ENCODE measurements at regions of chr12 and their contacts with region 1.

Region 1: GRCh38 chr12:95217377-95218149 is at the starts of genes FGD6 and VEZT:
- DNase-seq: peak; percentile 100
- H3K4me3 ChIP-seq: peak within 1 kb of the TSS; percentile 81 to 99 (median 94)
- H3K27ac ChIP-seq: peak within 1 kb of the TSS; percentile 88
- H3K4me1 ChIP-seq: peaks cover 37% of the 10 kb centered on the region
- H3K27me3 ChIP-seq: no peaks in the 10 kb centered on the region
- CTCF ChIP-seq: peak; percentile 61 to 70
- POLR2A ChIP-seq: peak; percentile 86
- total RNA-seq, gene FGD6: 14.0 and 17.8 TPM in 2 replicates
- total RNA-seq, gene VEZT: 85.2 and 91.3 TPM in 2 replicates

Region 2: GRCh38 chr12:94545935-94546771 is 671.4 kb before region 1 on chr12:
- CTCF ChIA-PET with region 1: no interaction called
- POLR2A ChIA-PET with region 1: no interaction called
- dilution Hi-C with region 1: no loop called
- intact Hi-C with region 1: loop called (anchors 1 kb)
- DNase-seq: peak; percentile 76
- H3K4me3 ChIP-seq: no peak overlapping the region
- H3K27ac ChIP-seq: no peak overlapping the region
- H3K4me1 ChIP-seq: no peaks in the 10 kb centered on the region
- H3K27me3 ChIP-seq: no peaks in the 10 kb centered on the region
- CTCF ChIP-seq: peak; percentile 83 to 91
- POLR2A ChIP-seq: no peak

Region 3: GRCh38 chr12:94615284-94616181 is 602.0 kb before region 1 on chr12:
- CTCF ChIA-PET with region 1: no interaction called
- POLR2A ChIA-PET with region 1: no interaction called
- dilution Hi-C with region 1: no loop called
- intact Hi-C with region 1: no loop called
- DNase-seq: peak; percentile 69
- H3K4me3 ChIP-seq: peak overlapping the region in 1 of 3 experiments; percentile 10
- H3K27ac ChIP-seq: peak overlapping the region; percentile 38
- H3K4me1 ChIP-seq: peaks cover 36% of the 10 kb centered on the region
- H3K27me3 ChIP-seq: no peaks in the 10 kb centered on the region
- CTCF ChIP-seq: no peak
- POLR2A ChIP-seq: no peak

Region 4: GRCh38 chr12:94849411-94849976 is 368.1 kb before region 1 on chr12:
- CTCF ChIA-PET with region 1: no interaction called
- POLR2A ChIA-PET with region 1: no interaction called
- dilution Hi-C with region 1: no loop called
- intact Hi-C with region 1: no loop called
- DNase-seq: no peak
- H3K4me3 ChIP-seq: no peak overlapping the region
- H3K27ac ChIP-seq: no peak overlapping the region
- H3K4me1 ChIP-seq: no peaks in the 10 kb centered on the region
- H3K27me3 ChIP-seq: peaks cover 2 to 4% of the 10 kb centered on the region in 2 experiments
- CTCF ChIP-seq: no peak
- POLR2A ChIP-seq: no peak

Region 5: GRCh38 chr12:95072900-95073697 is 144.5 kb before region 1 on chr12 and contains the start of gene NR2C1:
- CTCF ChIA-PET with region 1: interaction called, 3 read pairs
- POLR2A ChIA-PET with region 1: interaction called, 4 read pairs
- dilution Hi-C with region 1: no loop called
- intact Hi-C with region 1: loop called (anchors 1 kb)
- DNase-seq: peak; percentile 91
- H3K4me3 ChIP-seq: peak within 1 kb of the TSS; percentile 72 to 88 (median 87)
- H3K27ac ChIP-seq: peak within 1 kb of the TSS; percentile 79
- H3K4me1 ChIP-seq: peaks cover 4% of the 10 kb centered on the region
- H3K27me3 ChIP-seq: no peaks in the 10 kb centered on the region
- CTCF ChIP-seq: no peak
- POLR2A ChIP-seq: peak; percentile 47
- total RNA-seq, gene NR2C1: 36.3 and 37.7 TPM in 2 replicates

Region 6: DNA sequence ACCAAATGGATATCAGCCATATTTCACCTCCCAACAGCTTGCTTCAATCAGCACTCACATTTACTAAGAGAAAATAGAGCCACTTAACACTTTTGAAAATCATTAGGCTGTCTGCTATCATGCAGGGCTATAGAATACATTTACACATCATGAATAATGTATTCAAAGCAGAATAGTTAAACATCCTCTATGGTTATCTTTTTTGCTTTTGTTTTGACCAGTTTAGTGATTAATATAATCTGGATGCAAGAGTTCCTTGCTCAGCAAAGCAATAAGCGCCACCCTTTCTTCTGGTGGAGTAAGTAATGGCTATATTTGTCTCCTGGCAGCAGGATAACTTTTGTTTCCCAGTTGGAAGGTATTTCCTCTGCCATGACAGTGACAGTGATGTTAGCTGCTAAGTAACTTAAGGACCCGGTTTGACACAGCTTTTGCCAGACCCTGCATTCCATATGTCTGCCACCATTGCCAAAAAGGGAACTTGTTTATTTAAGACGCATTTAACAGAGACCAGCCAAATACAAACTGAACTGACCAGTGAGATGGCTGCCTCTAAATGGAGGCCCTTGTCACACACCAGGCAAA is 73.8 kb before region 1 on chr12:
- CTCF ChIA-PET with region 1: interaction called, 5 read pairs
- POLR2A ChIA-PET with region 1: interaction called, 6 read pairs
- dilution Hi-C with region 1: no loop called
- intact Hi-C with region 1: loop called (anchors 1 kb)
- DNase-seq: peak; percentile 58
- H3K4me3 ChIP-seq: no peak overlapping the region
- H3K27ac ChIP-seq: no peak overlapping the region
- H3K4me1 ChIP-seq: peaks cover 8% of the 10 kb centered on the region
- H3K27me3 ChIP-seq: no peaks in the 10 kb centered on the region
- CTCF ChIP-seq: no peak
- POLR2A ChIP-seq: no peak

Region 7: DNA sequence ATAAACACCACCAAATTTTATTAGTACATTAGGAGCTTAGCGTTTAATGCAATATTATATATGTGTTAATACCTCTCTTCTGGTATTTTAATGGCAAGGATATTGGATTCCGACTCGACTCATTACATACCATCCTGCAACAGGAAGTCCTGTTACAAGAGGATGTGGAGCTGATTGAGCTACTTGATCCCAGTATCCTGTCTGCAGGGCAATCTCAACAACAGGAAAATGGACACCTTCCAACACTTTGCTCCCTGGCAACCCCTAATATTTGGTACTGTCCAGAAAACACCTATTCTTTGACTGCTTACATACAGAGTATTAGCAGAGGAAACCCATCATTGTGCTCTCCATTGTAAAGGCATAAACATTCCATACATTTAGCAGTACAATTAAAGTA is 45.2 kb after region 1 on chr12:
- CTCF ChIA-PET with region 1: interaction called, 11 read pairs
- POLR2A ChIA-PET with region 1: interaction called, 3 read pairs
- dilution Hi-C with region 1: no loop called
- intact Hi-C with region 1: loop called (anchors 1 kb)
- DNase-seq: peak; percentile 98
- H3K4me3 ChIP-seq: peak overlapping the region in 1 of 3 experiments; percentile 20
- H3K27ac ChIP-seq: peak overlapping the region; percentile 93
- H3K4me1 ChIP-seq: peaks cover 39% of the 10 kb centered on the region
- H3K27me3 ChIP-seq: no peaks in the 10 kb centered on the region
- CTCF ChIP-seq: no peak
- POLR2A ChIP-seq: no peak

Region 8: GRCh38 chr12:95336390-95337067 is 119.0 kb after region 1 on chr12:
- CTCF ChIA-PET with region 1: interaction called, 60 read pairs
- POLR2A ChIA-PET with region 1: interaction called, 3 read pairs
- dilution Hi-C with region 1: no loop called
- intact Hi-C with region 1: loop called (anchors 1 kb)
- DNase-seq: peak; percentile 91
- H3K4me3 ChIP-seq: peak overlapping the region in 1 of 3 experiments; percentile 27
- H3K27ac ChIP-seq: peak overlapping the region; percentile 50
- H3K4me1 ChIP-seq: peaks cover 11% of the 10 kb centered on the region
- H3K27me3 ChIP-seq: no peaks in the 10 kb centered on the region
- CTCF ChIP-seq: peak; percentile 93 to 98
- POLR2A ChIP-seq: no peak

Region 9: DNA sequence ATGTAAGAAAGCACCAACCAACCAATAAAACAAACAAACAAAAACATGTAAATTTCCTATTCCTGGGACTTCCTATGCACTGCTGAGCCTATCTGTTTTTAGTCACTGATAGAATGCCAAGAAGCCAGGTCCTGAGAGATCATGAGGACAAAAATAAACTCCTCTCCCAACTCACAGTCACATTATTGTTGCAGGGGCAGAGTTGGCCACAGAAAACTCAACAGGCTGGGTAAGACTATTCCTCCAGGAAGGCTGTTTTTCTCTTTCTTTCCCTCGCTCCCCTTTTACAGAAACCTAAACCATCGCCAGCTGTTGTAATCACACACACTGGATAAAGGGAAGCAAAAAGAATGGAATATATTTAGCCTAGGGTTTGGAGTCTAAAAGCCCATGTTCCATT is 200.6 kb after region 1 on chr12:
- CTCF ChIA-PET with region 1: no interaction called
- POLR2A ChIA-PET with region 1: no interaction called
- dilution Hi-C with region 1: no loop called
- intact Hi-C with region 1: no loop called
- DNase-seq: no peak
- H3K4me3 ChIP-seq: no peak overlapping the region
- H3K27ac ChIP-seq: no peak overlapping the region
- H3K4me1 ChIP-seq: no peaks in the 10 kb centered on the region
- H3K27me3 ChIP-seq: peaks cover 0 to 2% of the 10 kb centered on the region in 2 experiments
- CTCF ChIP-seq: no peak
- POLR2A ChIP-seq: no peak

Measured in endothelial cell of umbilical vein (primary cell).